ENCODE measurements at regions of chr2 and their contacts with region 1.

Region 1: DNA sequence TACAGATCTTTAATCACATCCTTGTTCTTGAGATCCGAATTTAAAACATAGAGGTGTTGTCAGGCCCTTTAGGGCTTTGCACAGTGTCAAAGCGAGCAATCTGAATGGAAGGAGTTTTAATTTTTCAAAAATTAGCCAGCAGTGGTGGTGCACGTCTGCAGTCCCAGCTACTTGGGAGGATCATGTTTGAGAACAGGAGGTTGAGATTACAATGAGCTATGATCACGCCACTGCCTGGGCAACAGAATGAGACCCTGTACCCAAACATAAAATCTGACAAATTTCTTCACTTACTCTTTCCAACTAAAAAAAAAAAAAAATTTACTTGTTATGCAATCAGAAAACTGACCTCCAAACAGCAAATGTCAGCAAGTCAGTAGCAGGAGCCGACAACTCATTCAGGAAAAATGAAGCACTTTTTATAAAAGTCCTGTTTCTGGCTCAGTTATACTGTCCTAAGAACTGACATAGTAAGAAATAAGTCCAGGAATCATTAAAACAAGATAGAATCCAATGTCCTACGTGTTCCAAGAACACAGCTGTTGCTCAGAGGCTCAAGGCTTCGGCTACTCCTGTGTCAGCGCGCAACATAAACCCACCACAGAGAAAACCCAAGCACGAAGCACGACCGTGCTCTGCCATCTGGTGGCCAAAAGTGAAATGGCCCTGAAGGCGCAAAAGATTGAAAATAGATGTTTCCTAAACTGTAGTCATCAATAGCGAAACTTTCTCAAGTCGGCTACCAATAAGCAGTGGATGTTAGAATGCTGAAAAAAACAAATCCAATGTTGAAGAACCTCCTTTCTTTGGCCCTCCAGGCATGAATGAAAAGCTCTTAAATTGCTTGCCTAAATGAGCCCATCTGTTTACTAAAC is 138.1 kb downstream of the INO80D start:
- H3K4me3 ChIP-seq: no peak overlapping the region
- H3K27ac ChIP-seq: no peak overlapping the region
- H3K4me1 ChIP-seq: no peaks in the 10 kb centered on the region
- CTCF ChIP-seq: peak; percentile 70; the same call in 1 of the 2 replicates

Region 2: GRCh38 chr2:205934443-205934842 is 13.4 kb before region 1 on chr2:
- CTCF ChIA-PET with region 1: interaction called, 27 read pairs
- POLR2A ChIA-PET with region 1: no interaction called
- H3K4me3 ChIP-seq: no peak overlapping the region
- H3K27ac ChIP-seq: no peak overlapping the region
- H3K4me1 ChIP-seq: no peaks in the 10 kb centered on the region
- CTCF ChIP-seq: no peak

Region 3: GRCh38 chr2:205967391-205968075 is 19.7 kb after region 1 on chr2:
- CTCF ChIA-PET with region 1: interaction called, 15 read pairs
- POLR2A ChIA-PET with region 1: no interaction called
- H3K4me3 ChIP-seq: no peak overlapping the region
- H3K27ac ChIP-seq: no peak overlapping the region
- H3K4me1 ChIP-seq: no peaks in the 10 kb centered on the region
- CTCF ChIP-seq: no peak

Region 4: GRCh38 chr2:206031162-206031784 is 83.4 kb after region 1 on chr2:
- CTCF ChIA-PET with region 1: no interaction called
- POLR2A ChIA-PET with region 1: no interaction called
- H3K4me3 ChIP-seq: no peak overlapping the region
- H3K27ac ChIP-seq: no peak overlapping the region
- H3K4me1 ChIP-seq: peaks cover 3% of the 10 kb centered on the region; the same call in 1 of the 2 replicates
- CTCF ChIP-seq: no peak

Measured in HEK293 (cell line).